Activated CD4-positive, alpha-beta memory T cell treated with anti-CD3 and anti-CD28 coated beads, Interleukin-2, amount 10 ng/mL, durations not matched to agents 7 days and 5 days (primary cell): ENCODE measurements at regions of chr9 and their contacts with region 1.

Region 1: DNA sequence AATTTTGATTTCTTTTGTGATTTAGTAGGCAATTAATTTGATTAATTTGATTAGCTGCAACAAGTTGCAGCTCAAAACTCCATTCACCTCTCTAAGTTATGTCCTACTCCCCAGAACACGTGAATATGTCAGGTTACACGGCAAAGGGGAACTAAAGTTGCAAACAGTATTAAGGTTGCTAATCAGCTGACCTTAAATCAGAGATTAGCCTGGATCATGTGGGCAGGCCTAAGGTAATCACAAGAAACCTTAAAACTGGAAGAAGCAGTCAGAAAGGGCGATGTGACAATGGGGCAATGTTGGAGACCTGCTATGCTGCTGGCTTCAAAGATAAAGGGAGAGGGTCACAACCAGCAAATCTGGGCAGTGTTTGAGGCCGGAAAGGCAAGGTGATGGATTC is 47.3 kb upstream of the ANXA1 start:
- DNase-seq: no peak
- H3K4me3 Mint-ChIP-seq: no peak overlapping the region
- H3K27ac Mint-ChIP-seq: no peak overlapping the region
- H3K4me1 Mint-ChIP-seq: no peaks in the 10 kb centered on the region
- H3K27me3 Mint-ChIP-seq: peaks cover 12% of the 10 kb centered on the region

Region 2: DNA sequence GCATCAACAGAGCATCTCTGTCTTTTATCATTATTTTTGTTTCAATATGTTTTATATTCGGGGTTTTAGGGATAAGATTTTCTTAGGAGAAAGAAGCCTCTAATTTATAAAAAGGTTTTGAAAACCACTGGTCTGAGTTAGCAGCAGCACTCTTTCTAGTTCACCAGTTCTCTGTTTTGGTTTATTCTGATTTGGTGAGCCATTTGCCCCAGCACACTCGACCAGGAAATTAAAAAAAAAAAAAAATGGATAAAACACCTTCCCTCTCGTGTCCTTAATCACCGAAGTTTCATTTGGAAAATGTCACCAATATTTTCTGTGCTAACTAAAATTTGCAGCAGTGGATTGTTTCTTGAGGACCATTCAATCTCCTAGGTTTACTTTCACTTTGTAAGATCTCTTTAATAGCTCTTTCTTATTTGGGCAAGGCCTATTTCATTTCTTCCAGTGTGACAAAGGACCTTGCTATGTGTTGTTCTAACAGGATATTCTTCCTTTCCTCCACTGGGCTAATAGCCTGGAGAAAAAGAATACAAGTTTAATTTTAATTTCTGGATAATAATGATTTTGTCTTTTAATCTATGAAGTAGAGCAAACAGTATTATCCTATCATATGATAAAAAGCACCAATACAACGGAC is 10.5 kb before region 1 on chr9:
- CTCF ChIA-PET with region 1: interaction called, 12 read pairs
- POLR2A ChIA-PET with region 1: no interaction called
- DNase-seq: no peak
- H3K4me3 Mint-ChIP-seq: no peak overlapping the region
- H3K27ac Mint-ChIP-seq: no peak overlapping the region
- H3K4me1 Mint-ChIP-seq: peaks cover 3% of the 10 kb centered on the region
- H3K27me3 Mint-ChIP-seq: peaks cover 2% of the 10 kb centered on the region

Region 3: DNA sequence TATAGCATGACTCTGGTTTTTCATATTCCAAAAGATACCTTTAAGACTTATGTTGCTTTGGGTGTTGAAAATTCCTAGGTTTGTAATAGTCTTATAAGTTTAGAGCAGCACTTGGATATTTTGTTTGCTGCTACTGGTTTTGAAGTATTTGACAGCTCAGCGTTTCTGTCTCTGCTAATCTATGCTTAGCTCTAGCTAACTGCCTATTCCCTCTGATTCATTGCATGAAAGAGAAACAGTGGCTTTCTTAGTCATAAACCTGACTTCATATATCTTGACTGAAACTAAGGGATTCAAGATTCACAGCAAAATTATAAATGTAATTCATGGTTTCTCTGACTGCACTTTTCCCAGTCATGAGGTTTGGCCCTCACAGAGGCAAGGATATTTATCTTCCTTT is 11.7 kb after region 1 on chr9:
- CTCF ChIA-PET with region 1: interaction called, 11 read pairs
- POLR2A ChIA-PET with region 1: no interaction called
- DNase-seq: no peak
- H3K4me3 Mint-ChIP-seq: no peak overlapping the region
- H3K27ac Mint-ChIP-seq: no peak overlapping the region
- H3K4me1 Mint-ChIP-seq: peaks cover 31% of the 10 kb centered on the region
- H3K27me3 Mint-ChIP-seq: no peaks in the 10 kb centered on the region

Region 4: GRCh38 chr9:73149371-73150067 is 45.2 kb after region 1 on chr9:
- CTCF ChIA-PET with region 1: interaction called, 12 read pairs
- POLR2A ChIA-PET with region 1: interaction called, 4 read pairs
- DNase-seq: no peak
- H3K4me3 Mint-ChIP-seq: peak overlapping the region; percentile 24
- H3K27ac Mint-ChIP-seq: peak overlapping the region; percentile 88
- H3K4me1 Mint-ChIP-seq: peaks cover 61% of the 10 kb centered on the region
- H3K27me3 Mint-ChIP-seq: no peaks in the 10 kb centered on the region

Region 5: DNA sequence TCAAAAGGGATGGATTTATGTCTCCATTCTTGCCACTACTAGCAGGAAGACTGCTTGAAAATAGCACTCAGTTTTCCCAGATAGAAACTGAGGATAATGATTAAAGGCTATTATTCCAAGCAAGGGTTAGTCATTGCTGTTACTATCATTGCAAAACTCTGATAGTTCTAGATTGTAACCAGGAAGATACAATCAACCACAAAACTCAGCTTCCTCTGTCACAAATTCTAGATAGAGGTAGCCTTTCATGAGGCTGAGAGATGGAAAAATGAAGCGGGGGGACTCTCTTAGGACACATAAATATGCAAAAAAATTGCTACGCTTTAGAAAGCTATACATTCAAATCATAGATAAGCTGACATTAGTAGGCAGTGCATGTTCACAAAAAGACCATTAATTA is 50.4 kb after region 1 on chr9:
- CTCF ChIA-PET with region 1: interaction called, 12 read pairs
- POLR2A ChIA-PET with region 1: interaction called, 6 read pairs
- DNase-seq: no peak
- H3K4me3 Mint-ChIP-seq: peak overlapping the region; percentile 88
- H3K27ac Mint-ChIP-seq: peak overlapping the region; percentile 90
- H3K4me1 Mint-ChIP-seq: peaks cover 75% of the 10 kb centered on the region
- H3K27me3 Mint-ChIP-seq: no peaks in the 10 kb centered on the region

Region 6: GRCh38 chr9:73176450-73176875 is 72.1 kb after region 1 on chr9:
- CTCF ChIA-PET with region 1: interaction called, 78 read pairs
- POLR2A ChIA-PET with region 1: no interaction called
- DNase-seq: no peak
- H3K4me3 Mint-ChIP-seq: no peak overlapping the region
- H3K27ac Mint-ChIP-seq: no peak overlapping the region
- H3K4me1 Mint-ChIP-seq: peaks cover 2% of the 10 kb centered on the region
- H3K27me3 Mint-ChIP-seq: no peaks in the 10 kb centered on the region